ENCODE measurements at regions of chr9 and their contacts with region 1.

Region 1: GRCh38 chr9:137188490-137189296 is at the starts of genes ANAPC2 and SSNA1:
- DNase-seq: peak; percentile 85 to 97 (median 93)

Region 2: DNA sequence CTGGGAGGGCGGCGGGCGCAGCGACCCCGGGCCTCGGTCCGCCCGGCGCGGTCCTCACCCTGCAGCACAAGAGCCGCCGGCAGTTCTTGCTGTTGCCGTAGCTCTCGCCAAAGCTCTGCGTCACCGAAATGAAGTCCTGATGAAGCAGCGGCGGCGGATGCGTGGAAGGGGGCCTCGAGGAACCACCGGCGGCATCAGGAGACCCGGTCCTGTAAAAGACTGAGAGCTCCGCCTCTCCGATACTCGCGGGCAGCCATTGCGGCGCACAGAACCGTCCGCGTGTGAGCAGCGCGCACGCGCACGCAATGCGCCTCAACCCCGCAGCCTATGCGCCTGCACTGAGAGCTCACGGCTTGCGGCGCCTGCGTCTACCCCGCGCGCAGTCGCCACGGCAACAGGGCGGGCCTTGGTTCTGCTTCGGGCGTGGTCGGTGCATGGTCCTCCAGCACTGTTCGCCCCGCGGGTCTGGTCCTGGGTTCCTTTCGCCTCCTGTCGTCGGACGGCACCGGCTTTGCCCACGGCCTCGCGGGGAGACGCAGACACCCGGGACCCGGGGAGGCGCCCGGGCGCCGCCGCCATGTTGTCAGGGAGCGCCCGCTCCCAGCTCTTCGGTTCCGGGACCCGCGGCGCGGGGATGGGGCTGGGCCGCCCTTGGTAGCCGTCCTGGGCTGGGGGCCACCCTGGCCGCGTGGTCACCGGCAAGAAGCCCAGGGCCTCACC is 59.1 kb before region 1 on chr9:
- intact Hi-C with region 1: loop called (anchors 10 kb)
- DNase-seq: peak; percentile 69 to 94 (median 88)

Region 3: GRCh38 chr9:137227063-137227852 is 38.6 kb after region 1 on chr9 and contains the start of gene RNF224:
- intact Hi-C with region 1: loop called (anchors 5 kb)
- DNase-seq: peak; percentile 60 to 91 (median 80)

Region 4: DNA sequence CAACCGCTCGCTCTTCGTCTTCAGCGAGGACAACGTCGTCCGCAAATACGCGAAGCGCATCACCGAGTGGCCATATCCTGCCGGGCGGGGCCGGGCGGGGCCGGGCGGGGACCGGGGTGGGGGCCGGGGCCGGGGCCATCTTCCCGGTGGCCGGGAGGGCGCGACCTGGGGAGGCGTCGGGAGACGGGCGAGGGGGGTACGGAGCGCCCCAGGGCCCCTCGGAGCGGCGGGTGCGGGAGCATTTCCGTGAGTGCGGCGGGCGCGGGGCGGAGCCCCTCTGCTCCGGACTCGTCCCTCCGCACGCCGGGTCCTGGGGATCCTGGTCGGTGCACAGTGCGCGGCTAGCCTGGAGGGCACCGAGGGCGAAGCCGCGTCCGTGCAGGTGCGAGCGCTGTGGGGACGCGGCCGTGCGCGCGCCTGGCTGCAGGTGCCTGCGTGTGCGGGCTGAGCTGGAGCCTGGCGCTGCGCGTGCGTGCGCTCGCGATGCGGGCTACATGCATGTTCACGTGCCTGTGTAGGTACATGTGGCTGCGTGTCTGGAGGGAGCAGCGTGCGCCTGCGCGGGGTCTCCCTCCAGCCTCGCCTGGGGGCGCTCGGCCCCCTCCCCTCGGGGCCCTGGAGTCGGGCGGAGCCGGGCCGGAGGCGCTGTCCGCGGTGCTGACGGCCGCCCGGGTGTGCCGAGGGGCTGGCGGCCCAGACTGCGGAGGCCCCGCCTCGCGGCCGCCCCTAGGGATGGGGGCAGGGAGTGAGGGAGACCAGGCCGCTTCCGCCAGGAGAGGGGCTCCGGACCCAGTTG is 689.7 kb after region 1 on chr9:
- intact Hi-C with region 1: no loop called
- DNase-seq: peak in 39 of 42 donors; percentile 18 to 73 (median 55)

Measured in head of caudate nucleus (tissue), 42 donors.